Dorsolateral prefrontal cortex (tissue), 120 donors: ENCODE measurements at regions of chr1 and their contacts with region 1.

Region 1: DNA sequence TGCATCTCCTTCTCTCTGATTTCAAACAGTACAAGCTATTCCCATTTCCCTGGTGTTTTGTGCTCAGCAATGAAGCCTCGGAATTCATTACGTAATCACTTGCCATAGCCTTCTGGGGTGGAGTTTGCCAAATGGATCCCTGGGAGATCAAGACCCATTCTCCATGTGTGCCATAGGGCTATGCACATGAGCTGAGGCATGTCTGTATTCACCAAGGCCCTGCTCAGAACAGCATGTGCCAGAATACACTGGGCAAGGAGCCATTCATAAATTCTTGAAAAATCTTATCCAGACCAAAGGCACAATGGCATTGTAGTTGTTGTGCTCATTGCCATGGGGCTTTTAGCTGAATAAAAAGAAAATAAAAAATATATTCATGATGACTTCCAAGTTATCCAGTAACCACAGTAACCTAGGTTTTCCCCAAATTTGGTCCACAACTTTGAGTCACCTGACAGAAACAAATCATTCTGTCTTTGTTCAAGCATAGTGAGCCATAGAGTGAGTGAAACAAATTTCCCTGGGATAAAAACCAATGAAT is 53.0 kb downstream of the CRB1 start:
- DNase-seq: no peak
- H3K4me3 ChIP-seq: no peak overlapping the region
- H3K27ac ChIP-seq: peak overlapping the region in 46 of 59 donors; percentile 3 to 81 (median 48)
- H3K27me3 ChIP-seq: no peaks in the 10 kb centered on the region
- CTCF ChIP-seq: no peak

Region 2: DNA sequence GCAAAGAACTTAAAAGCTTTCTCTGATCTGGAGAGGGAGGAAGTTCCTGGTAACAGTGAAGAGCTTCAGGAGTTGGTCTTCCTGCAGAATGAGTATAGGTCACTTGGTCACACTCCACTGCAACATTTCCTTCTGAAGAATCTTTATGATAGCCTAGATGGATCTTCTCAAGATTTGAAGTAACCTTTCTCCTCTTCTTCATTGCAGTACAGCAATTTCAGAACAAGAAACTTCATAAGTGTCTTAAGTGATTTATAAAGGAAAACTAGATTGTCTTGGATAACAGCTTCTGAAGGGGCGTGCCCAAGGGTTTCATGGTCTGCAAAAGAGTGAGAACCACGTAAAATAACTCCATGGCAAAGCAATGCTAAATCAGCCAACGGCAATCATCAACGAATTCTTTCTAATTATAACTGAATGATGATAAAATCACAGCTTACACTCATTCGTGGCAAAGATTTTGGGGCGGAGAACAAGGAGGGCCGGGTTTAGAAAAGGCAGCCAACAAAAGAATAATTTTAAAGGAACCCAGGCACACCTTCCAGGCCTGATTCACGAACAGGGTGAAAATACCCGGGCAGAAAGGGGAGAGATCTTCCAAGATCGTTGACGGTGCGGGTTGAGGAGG is 120.7 kb before region 1 on chr1:
- intact Hi-C with region 1: no loop called
- DNase-seq: peak in 2 of 10 donors; percentile 12 to 13
- H3K4me3 ChIP-seq: peak overlapping the region; percentile 67 to 98 (median 88)
- H3K27ac ChIP-seq: peak overlapping the region in 58 of 59 donors; percentile 80 to 98 (median 94)
- H3K27me3 ChIP-seq: no peaks in the 10 kb centered on the region
- CTCF ChIP-seq: no peak

Region 3: GRCh38 chr1:197224160-197224559 is 96.9 kb before region 1 on chr1:
- intact Hi-C with region 1: no loop called
- DNase-seq: no peak
- H3K4me3 ChIP-seq: no peak overlapping the region
- H3K27ac ChIP-seq: no peak overlapping the region
- H3K27me3 ChIP-seq: no peaks in the 10 kb centered on the region
- CTCF ChIP-seq: peak in 53 of 56 donors; percentile 26 to 86 (median 57)

Region 4: DNA sequence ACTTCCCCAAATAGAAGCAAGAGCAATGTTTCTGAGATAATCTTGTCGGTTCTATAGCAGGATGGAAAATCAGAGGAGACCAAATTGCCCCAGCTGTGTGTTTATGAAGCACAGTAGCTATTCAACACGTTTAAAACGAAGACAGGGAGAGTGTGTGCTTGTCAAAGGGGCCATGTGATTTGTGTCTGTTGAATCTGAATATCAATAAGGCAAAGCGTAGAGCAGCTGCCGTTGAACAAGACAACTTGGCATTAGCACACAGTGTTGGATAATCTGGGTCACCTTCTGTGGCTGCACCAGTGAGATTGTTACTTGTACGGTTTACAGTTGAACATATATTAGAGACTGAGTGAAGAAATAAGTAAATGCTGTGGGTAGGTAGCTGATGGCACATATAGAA is 52.0 kb before region 1 on chr1:
- intact Hi-C with region 1: no loop called
- DNase-seq: peak in 6 of 10 donors; percentile 25 to 63 (median 50)
- H3K4me3 ChIP-seq: peak overlapping the region; percentile 26 to 71 (median 55)
- H3K27ac ChIP-seq: peak overlapping the region in 58 of 59 donors; percentile 18 to 89 (median 78)
- H3K27me3 ChIP-seq: no peaks in the 10 kb centered on the region
- CTCF ChIP-seq: peak in 2 of 56 donors; percentile 8 to 15

Region 5: GRCh38 chr1:197356723-197357533 is 35.9 kb after region 1 on chr1:
- intact Hi-C with region 1: loop called in 1 of 2 experiments (anchors 5 kb)
- DNase-seq: peak in 2 of 10 donors; percentile 8 to 34
- H3K4me3 ChIP-seq: no peak overlapping the region
- H3K27ac ChIP-seq: no peak overlapping the region
- H3K27me3 ChIP-seq: no peaks in the 10 kb centered on the region
- CTCF ChIP-seq: peak; percentile 46 to 85 (median 64)

Region 6: DNA sequence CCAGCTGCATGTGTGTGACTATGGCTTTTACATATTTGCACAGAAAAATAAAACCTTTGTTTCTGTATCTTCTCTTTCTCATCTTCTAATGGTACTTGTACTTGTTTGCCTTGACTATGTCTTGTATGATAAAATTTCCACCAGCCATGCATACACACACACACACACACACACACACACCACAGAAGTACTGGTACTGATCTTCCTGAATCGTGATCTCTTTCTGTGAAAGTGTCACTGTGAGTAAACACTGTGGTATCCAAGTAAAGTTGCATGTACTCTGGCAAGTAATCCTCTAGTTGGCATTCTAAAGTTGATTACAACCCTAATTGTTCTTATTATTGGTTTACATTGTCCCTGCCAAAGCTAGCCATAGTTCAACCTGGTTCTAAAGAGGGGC is 123.7 kb after region 1 on chr1:
- intact Hi-C with region 1: no loop called
- DNase-seq: no peak
- H3K4me3 ChIP-seq: no peak overlapping the region
- H3K27ac ChIP-seq: no peak overlapping the region
- H3K27me3 ChIP-seq: no peaks in the 10 kb centered on the region
- CTCF ChIP-seq: no peak